GM10248 (cell line): ENCODE measurements at regions of chr4 and their contacts with region 1.

Region 1: GRCh38 chr4:44448548-44449461 is at the start of gene KCTD8:
- DNase-seq: peak; percentile 81
- CTCF ChIP-seq: peak; percentile 74

Region 2: GRCh38 chr4:44462259-44462658 is 13.5 kb after region 1 on chr4:
- CTCF ChIA-PET with region 1: interaction called, 24 read pairs
- POLR2A ChIA-PET with region 1: no interaction called
- DNase-seq: no peak
- CTCF ChIP-seq: no peak